ENCODE measurements at regions of chr1 and their contacts with region 1.

Region 1: GRCh38 chr1:231410036-231410612 is 12.0 kb downstream of the EGLN1 start:
- DNase-seq: no peak
- ATAC-seq: peak in 1 of 8 donors; percentile 56
- H3K4me3 ChIP-seq: peak overlapping the region in 1 of 10 donors; percentile 27
- H3K27ac ChIP-seq: peak overlapping the region in 2 of 10 donors; percentile 16 to 74
- H3K4me1 ChIP-seq: peaks cover 17 to 100% (median 96%) of the 10 kb centered on the region in 9 donors
- H3K27me3 ChIP-seq: no peaks in the 10 kb centered on the region
- CTCF ChIP-seq: no peak

Region 2: DNA sequence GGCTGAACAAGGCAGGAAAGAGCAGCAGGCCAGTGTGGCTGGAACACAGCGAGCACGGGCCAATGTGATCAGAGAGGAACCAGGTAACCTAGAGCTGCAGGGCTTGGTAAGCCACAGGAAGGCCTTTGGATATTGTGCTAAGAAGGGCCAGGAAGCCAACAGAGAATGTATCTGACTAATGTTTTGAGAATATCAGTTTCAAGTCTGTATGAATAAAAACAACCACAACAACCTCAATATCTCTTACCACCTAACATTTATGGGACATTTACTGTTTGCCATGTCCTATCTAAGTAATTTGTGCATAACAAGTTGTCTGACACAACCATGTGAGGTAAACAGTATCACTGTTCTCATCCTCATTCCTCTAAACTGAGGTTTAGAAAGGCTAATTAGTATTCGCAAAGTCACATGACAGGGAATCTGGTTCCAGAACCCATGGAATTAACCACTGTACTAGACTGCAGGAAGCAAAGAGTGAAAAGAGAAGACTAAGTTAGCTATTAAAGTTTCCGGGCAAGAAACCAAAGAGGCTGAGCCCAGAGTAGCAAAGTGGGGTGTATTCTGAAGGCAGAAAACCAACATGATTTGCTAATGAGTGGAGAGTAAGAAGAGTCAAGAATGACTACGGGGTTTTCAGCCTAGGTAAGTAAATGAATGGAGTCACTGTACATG is 33.1 kb before region 1 on chr1:
- intact Hi-C with region 1: loop called in 3 of 10 experiments (anchors 5 kb)
- DNase-seq: no peak
- ATAC-seq: peak in 3 of 8 donors; percentile 15 to 45 (median 35)
- H3K4me3 ChIP-seq: no peak overlapping the region
- H3K27ac ChIP-seq: peak overlapping the region in 3 of 10 donors; percentile 22 to 61 (median 28)
- H3K4me1 ChIP-seq: peaks cover 8 to 68% (median 55%) of the 10 kb centered on the region in 9 donors
- H3K27me3 ChIP-seq: no peaks in the 10 kb centered on the region
- CTCF ChIP-seq: no peak

Measured in heart right ventricle (tissue), 16 donors.